Heart left ventricle (tissue), 16 donors: ENCODE measurements at regions of chr19 and their contacts with region 1.

Region 1: DNA sequence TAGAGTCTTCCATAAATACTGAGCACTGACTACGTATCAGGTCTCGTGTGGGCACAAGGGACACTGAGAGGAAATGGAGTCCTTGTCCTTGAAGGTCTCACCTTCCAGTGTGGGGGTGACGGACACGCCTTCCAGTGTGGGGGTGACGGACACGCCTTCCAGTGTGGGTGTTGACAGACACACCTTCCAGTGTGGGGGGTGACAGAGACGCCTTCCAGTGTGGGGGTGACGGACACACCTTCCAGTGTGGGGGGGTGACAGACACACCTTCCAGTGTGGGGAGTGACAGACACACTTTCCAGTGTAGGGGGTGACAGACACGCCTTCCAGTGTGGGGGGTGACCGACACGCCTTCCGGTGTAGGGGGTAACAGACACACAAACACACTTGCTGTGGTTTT is 14.3 kb upstream of the EDDM13 start:
- DNase-seq: no peak
- ATAC-seq: no peak
- H3K4me3 ChIP-seq: no peak overlapping the region
- H3K27ac ChIP-seq: no peak overlapping the region
- H3K4me1 ChIP-seq: no peaks in the 10 kb centered on the region
- H3K27me3 ChIP-seq: no peaks in the 10 kb centered on the region
- CTCF ChIP-seq: no peak
- POLR2A ChIP-seq: no peak

Region 2: DNA sequence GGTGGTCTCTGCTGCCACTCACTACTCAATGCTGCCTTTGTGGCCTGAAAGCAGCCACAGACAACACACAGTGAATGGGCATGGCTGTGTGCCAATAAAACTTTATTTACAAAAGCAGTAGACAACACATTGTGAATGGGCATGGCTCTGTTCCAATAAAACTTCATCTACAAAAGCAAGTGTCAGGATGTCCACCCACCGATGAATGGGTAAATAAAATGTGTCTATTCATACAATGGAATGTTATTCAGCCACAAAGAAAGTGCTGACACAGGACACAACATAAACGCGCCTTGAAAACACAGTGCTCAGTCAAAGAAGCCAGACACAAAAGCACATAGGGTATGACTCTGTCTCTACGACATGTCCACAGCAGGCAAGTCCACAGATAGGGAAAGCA is 36.3 kb after region 1 on chr19:
- intact Hi-C with region 1: loop called in 1 of 10 experiments (anchors 5 kb)
- DNase-seq: no peak
- ATAC-seq: no peak
- H3K4me3 ChIP-seq: no peak overlapping the region
- H3K27ac ChIP-seq: no peak overlapping the region
- H3K4me1 ChIP-seq: peaks cover 0 to 5% (median 0%) of the 10 kb centered on the region in 12 donors
- H3K27me3 ChIP-seq: no peaks in the 10 kb centered on the region
- CTCF ChIP-seq: no peak
- POLR2A ChIP-seq: no peak

Region 3: GRCh38 chr19:56333505-56333904 is 75.2 kb after region 1 on chr19:
- intact Hi-C with region 1: loop called (anchors 5 kb)
- DNase-seq: peak in 1 of 5 donors; percentile 24
- ATAC-seq: peak in 2 of 4 donors; percentile 60 to 69
- H3K4me3 ChIP-seq: no peak overlapping the region
- H3K27ac ChIP-seq: no peak overlapping the region
- H3K4me1 ChIP-seq: no peaks in the 10 kb centered on the region
- H3K27me3 ChIP-seq: no peaks in the 10 kb centered on the region
- CTCF ChIP-seq: peak; percentile 36 to 70 (median 60)
- POLR2A ChIP-seq: no peak